Activated CD4-positive, alpha-beta T cell treated with anti-CD3 and anti-CD28 coated beads, Interleukin-2, amount 10 ng/mL, durations not matched to agents 7 days and 5 days (primary cell): ENCODE measurements at regions of chr15 and their contacts with region 1.

Region 1: GRCh38 chr15:90101969-90102890 is at the start of gene IDH2:
- DNase-seq: peak; percentile 74
- H3K4me3 Mint-ChIP-seq: peak within 1 kb of the TSS; percentile 75
- H3K27ac Mint-ChIP-seq: peak within 1 kb of the TSS; percentile 96
- H3K4me1 Mint-ChIP-seq: peaks cover 54% of the 10 kb centered on the region
- H3K27me3 Mint-ChIP-seq: peaks cover 3% of the 10 kb centered on the region
- total RNA-seq, gene IDH2: 332 to 349 TPM

Region 2: GRCh38 chr15:90086868-90087268 is 15.4 kb before region 1 on chr15:
- CTCF ChIA-PET with region 1: interaction called, 21 read pairs
- POLR2A ChIA-PET with region 1: no interaction called
- DNase-seq: peak; percentile 62
- H3K4me3 Mint-ChIP-seq: no peak overlapping the region
- H3K27ac Mint-ChIP-seq: peak overlapping the region; percentile 58
- H3K4me1 Mint-ChIP-seq: peaks cover 25% of the 10 kb centered on the region
- H3K27me3 Mint-ChIP-seq: no peaks in the 10 kb centered on the region

Region 3: DNA sequence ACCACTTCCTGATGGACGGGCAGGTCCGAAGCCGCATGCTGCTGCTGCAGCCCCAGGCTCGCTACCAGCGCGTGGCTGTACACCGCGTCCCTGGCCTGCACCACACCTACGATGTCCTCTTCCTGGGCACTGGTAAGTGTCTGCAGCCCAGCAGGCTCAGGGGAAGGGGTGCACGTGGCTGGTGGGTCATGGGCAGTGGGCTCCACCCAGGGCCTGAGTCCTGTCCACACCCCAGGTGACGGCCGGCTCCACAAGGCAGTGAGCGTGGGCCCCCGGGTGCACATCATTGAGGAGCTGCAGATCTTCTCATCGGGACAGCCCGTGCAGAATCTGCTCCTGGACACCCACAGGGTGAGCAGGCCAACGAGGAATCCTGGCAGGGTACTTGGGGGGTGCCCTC is 122.8 kb after region 1 on chr15:
- CTCF ChIA-PET with region 1: no interaction called
- POLR2A ChIA-PET with region 1: no interaction called
- DNase-seq: no peak
- H3K4me3 Mint-ChIP-seq: no peak overlapping the region
- H3K27ac Mint-ChIP-seq: no peak overlapping the region
- H3K4me1 Mint-ChIP-seq: peaks cover 12% of the 10 kb centered on the region
- H3K27me3 Mint-ChIP-seq: no peaks in the 10 kb centered on the region